ENCODE measurements at regions of chr10 and their contacts with region 1.

Region 1: DNA sequence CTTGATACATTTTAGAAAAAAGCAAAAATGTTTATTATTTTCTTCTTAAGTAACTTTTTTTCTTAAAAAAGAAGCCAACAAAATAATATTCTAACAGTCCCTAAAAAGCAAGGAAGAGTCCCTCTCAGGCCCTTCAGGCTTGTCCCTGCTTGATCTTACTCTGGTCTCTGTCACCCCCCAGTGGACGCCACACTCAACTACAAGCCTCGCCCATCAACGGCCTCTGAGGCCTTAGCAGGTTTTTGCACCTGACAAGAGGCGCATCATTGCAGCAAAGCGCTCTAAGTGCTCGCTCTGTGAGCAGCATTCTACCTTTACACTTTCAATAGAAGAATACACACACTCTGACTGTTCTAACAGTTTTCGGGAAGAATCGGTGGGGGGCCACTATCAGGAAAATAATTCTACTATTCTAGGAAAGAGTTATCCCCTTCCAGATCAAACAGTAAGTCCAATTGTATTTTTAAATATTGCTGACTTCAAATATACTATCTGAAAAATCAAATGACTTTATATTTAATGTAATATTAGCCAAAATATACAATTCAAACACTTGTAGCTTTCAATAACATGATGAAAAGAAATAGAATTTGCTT is 139.2 kb downstream of the USP6NL start:
- DNase-seq: peak; percentile 53
- ATAC-seq: peak; percentile 95
- H3K4me3 Mint-ChIP-seq: no peak overlapping the region
- H3K27ac Mint-ChIP-seq: peak overlapping the region; percentile 61
- H3K4me1 Mint-ChIP-seq: peaks cover 15% of the 10 kb centered on the region
- H3K27me3 Mint-ChIP-seq: no peaks in the 10 kb centered on the region
- CTCF ChIP-seq: no peak

Region 2: DNA sequence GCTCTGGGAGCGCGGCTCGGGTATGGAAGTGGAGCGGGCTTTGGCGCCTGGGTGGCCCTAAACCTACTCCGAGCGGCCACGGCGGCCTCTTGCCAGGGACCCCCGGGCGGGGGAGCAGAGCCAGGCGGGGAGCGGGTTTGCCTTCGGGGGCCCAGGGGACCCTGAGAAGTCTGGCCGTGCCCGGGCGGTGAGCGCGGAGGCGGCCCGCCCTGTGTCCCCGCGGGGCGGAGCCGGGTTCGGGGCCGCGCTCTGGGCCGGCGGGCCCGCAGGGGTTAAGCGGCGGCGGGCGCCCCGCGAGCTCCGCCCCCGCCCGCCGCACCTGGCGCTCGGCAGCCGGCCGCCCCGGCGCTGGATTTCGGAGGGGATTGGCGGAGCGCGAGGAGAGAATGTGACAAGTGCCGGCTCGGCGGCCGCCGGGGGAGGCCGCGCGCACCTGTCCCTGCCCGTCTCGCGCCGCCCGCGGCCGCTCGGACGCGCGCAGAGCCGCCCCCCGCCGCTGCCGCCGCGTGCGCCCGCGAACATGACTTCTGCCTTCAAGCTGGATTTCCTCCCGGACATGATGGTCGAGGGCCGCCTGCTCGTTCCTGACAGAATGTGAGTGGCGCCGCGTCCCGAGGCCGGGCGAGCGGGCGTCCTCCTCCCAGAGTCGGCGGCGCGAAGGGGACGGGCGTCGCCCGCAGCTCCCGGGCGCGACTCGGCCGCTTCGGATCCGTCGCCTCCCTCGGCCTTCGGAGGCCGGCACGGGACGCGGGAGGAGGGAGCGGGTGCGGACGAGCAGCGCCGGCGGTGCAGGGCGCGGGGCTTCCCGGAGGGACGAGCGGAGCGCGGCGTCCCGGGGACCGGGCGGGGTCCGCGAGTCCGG is 454.5 kb before region 1 on chr10 and contains the start of gene CELF2:
- CTCF ChIA-PET with region 1: no interaction called
- POLR2A ChIA-PET with region 1: no interaction called
- intact Hi-C with region 1: loop called (anchors 10 kb)
- DNase-seq: peak; percentile 53
- ATAC-seq: peak; percentile 78
- H3K4me3 Mint-ChIP-seq: peak within 1 kb of the TSS; percentile 79
- H3K27ac Mint-ChIP-seq: no peak within 1 kb of the TSS
- H3K4me1 Mint-ChIP-seq: peaks cover 12% of the 10 kb centered on the region
- H3K27me3 Mint-ChIP-seq: peaks cover 67% of the 10 kb centered on the region
- CTCF ChIP-seq: no peak
- total RNA-seq, gene CELF2: 78.9 and 89.2 TPM in 2 replicates

Region 3: DNA sequence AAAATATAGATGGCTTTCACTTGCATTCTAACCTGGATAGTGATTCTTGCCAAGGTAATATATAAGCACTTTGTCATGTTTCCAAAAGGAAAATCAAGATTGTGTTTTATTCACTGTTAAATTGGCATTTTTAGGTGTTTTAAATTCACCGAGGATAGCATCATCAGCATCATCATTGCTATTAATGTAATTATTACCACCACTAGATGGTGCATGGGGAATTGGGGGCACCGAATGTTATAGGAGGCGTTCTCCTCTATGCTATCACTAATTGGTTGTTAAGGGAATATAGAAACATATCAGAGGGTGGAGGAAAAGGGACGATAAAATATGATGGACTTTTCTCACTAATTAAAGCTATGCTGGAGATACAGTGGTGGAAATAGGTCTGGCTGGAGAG is 359.1 kb before region 1 on chr10:
- CTCF ChIA-PET with region 1: interaction called, 3 read pairs
- POLR2A ChIA-PET with region 1: no interaction called
- intact Hi-C with region 1: loop called (anchors 1 kb)
- DNase-seq: no peak
- ATAC-seq: peak; percentile 73
- H3K4me3 Mint-ChIP-seq: no peak overlapping the region
- H3K27ac Mint-ChIP-seq: no peak overlapping the region
- H3K4me1 Mint-ChIP-seq: peaks cover 9% of the 10 kb centered on the region
- H3K27me3 Mint-ChIP-seq: no peaks in the 10 kb centered on the region
- CTCF ChIP-seq: no peak

Region 4: GRCh38 chr10:11178606-11179515 is 293.4 kb before region 1 on chr10:
- CTCF ChIA-PET with region 1: no interaction called
- POLR2A ChIA-PET with region 1: no interaction called
- intact Hi-C with region 1: loop called (anchors 5 kb)
- DNase-seq: peak; percentile 43
- ATAC-seq: peak; percentile 75
- H3K4me3 Mint-ChIP-seq: peak overlapping the region; percentile 80
- H3K27ac Mint-ChIP-seq: peak overlapping the region; percentile 94
- H3K4me1 Mint-ChIP-seq: peaks cover 30% of the 10 kb centered on the region
- H3K27me3 Mint-ChIP-seq: no peaks in the 10 kb centered on the region
- CTCF ChIP-seq: no peak

Region 5: GRCh38 chr10:11245510-11245909 is 226.7 kb before region 1 on chr10:
- CTCF ChIA-PET with region 1: no interaction called
- POLR2A ChIA-PET with region 1: no interaction called
- intact Hi-C with region 1: no loop called
- DNase-seq: no peak
- ATAC-seq: peak; percentile 69
- H3K4me3 Mint-ChIP-seq: no peak overlapping the region
- H3K27ac Mint-ChIP-seq: no peak overlapping the region
- H3K4me1 Mint-ChIP-seq: peaks cover 16% of the 10 kb centered on the region
- H3K27me3 Mint-ChIP-seq: no peaks in the 10 kb centered on the region
- CTCF ChIP-seq: no peak

Region 6: GRCh38 chr10:11335167-11335652 is 137.0 kb before region 1 on chr10:
- CTCF ChIA-PET with region 1: no interaction called
- POLR2A ChIA-PET with region 1: no interaction called
- intact Hi-C with region 1: loop called (anchors 5 kb)
- DNase-seq: no peak
- ATAC-seq: peak; percentile 88
- H3K4me3 Mint-ChIP-seq: peak overlapping the region; percentile 50
- H3K27ac Mint-ChIP-seq: peak overlapping the region; percentile 90
- H3K4me1 Mint-ChIP-seq: peaks cover 33% of the 10 kb centered on the region
- H3K27me3 Mint-ChIP-seq: no peaks in the 10 kb centered on the region
- CTCF ChIP-seq: no peak

Region 7: DNA sequence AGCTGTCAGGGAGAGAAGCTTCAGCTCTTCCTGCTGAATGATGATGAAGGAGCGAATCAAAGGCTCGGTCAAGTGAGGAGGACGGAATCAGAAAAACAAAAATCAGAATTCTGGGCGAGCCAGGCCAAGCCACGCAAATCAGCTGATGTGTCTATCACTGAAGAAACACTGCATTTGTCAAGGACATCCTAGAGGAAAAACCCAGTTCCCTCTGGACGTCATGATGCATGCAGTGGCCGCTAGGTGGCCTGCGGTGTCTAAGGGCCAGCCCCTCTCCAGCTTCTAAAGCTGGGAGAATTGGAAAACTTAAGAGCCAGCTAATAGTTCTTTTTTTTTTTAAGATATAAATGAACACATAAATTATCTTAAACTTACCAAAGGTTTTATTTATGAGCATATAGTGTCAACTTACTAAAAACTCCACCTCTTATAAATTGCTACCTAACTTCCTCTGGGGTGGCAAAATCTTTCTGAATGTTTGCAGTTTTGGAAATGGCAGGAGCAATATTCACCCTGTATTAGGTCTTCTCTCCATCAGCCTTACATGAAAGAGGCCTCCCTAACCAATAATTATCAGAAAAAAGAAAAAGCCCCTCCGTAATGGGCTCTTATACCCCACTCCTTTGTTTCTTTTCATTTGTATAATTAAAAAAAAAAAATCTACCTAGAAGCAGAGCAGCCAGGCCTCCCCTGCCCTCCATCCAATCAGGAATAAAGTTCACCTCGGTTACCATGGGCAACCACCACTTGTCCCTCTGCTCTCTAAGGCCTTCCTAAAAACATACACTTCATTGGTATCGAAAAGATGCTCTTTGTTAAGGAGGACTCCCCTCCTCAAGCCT is 47.6 kb before region 1 on chr10:
- CTCF ChIA-PET with region 1: no interaction called
- POLR2A ChIA-PET with region 1: no interaction called
- intact Hi-C with region 1: loop called (anchors 2 kb)
- DNase-seq: no peak
- ATAC-seq: no peak
- H3K4me3 Mint-ChIP-seq: no peak overlapping the region
- H3K27ac Mint-ChIP-seq: no peak overlapping the region
- H3K4me1 Mint-ChIP-seq: no peaks in the 10 kb centered on the region
- H3K27me3 Mint-ChIP-seq: no peaks in the 10 kb centered on the region
- CTCF ChIP-seq: no peak

Region 8: DNA sequence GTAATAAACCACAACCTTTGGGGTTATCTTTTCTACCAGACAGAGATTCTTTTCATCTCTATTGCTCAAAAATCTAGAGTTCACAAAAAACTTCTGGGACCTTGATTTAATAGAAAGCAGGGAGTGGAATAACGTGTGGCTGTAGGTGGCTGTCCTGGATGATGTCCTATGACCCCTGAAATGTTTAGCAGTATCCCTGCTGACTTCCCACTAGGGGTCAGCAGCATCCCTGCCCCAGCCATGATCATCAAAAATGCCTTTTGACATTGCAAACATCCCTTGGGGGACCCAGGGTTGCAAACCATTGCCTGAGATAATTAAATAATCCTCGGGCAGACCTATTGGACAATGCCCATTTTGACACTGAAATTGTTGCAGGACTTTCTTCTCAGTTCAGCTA is 37.9 kb before region 1 on chr10:
- CTCF ChIA-PET with region 1: no interaction called
- POLR2A ChIA-PET with region 1: no interaction called
- intact Hi-C with region 1: loop called (anchors 1 kb)
- DNase-seq: no peak
- ATAC-seq: no peak
- H3K4me3 Mint-ChIP-seq: no peak overlapping the region
- H3K27ac Mint-ChIP-seq: no peak overlapping the region
- H3K4me1 Mint-ChIP-seq: peaks cover 3% of the 10 kb centered on the region
- H3K27me3 Mint-ChIP-seq: no peaks in the 10 kb centered on the region
- CTCF ChIP-seq: no peak

Region 9: GRCh38 chr10:11488126-11488525 is 15.9 kb after region 1 on chr10:
- CTCF ChIA-PET with region 1: no interaction called
- POLR2A ChIA-PET with region 1: no interaction called
- intact Hi-C with region 1: no loop called
- DNase-seq: no peak
- ATAC-seq: no peak
- H3K4me3 Mint-ChIP-seq: no peak overlapping the region
- H3K27ac Mint-ChIP-seq: no peak overlapping the region
- H3K4me1 Mint-ChIP-seq: peaks cover 16% of the 10 kb centered on the region
- H3K27me3 Mint-ChIP-seq: no peaks in the 10 kb centered on the region
- CTCF ChIP-seq: no peak